PC-3 (cell line): ENCODE measurements at regions of chr11 and their contacts with region 1.

Region 1: GRCh38 chr11:102495161-102496042 is 35.1 kb downstream of the MMP7 start:
- DNase-seq: peak; percentile 95
- ATAC-seq: peak; percentile 41
- H3K4me3 ChIP-seq: no peak overlapping the region
- H3K27ac ChIP-seq: peak overlapping the region; percentile 53; the same call in 1 of the 2 replicates
- H3K4me1 ChIP-seq: peaks cover 21% of the 10 kb centered on the region
- H3K27me3 ChIP-seq: no peaks in the 10 kb centered on the region
- CTCF ChIP-seq: peak; percentile 95

Region 2: DNA sequence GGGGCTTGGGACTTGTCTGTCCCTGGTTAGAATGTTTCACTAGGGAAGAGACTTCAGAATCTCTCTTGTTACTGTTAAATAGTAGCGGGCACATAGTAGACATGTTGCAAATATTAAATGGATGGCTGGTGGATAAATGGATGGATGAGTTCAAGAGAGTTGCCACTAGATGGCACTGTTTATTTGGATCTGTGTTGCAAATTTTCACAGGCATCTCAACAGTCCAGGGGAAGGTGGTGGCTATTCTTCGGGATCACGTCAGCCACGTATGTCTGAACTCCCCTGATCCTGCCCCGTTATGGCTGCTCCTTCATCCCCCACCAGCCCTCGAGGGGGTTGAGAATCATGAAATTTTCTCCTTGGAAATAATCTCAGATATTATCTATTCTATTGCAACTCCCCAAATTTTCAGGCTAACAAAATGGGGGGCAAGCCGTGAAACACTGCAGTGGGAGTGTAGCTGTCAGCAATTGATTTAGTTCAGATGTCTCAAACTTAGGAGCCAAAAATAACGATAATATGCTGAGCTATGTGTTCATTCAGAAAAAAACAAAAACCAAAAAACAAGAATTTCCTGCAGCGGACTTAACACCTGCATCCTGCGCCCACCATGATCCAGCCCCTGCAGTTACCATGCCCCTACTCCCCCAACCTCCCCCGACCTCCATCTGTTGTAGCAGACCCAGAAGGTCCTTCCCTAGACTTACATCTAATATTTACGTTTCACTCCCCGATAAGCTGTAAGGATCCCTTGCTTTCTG is 207.3 kb before region 1 on chr11:
- CTCF ChIA-PET with region 1: no interaction called
- POLR2A ChIA-PET with region 1: no interaction called
- intact Hi-C with region 1: loop called (anchors 1 kb)
- DNase-seq: peak; percentile 96
- ATAC-seq: peak; percentile 70
- H3K4me3 ChIP-seq: peak overlapping the region; percentile 52
- H3K27ac ChIP-seq: peak overlapping the region; percentile 13
- H3K4me1 ChIP-seq: peaks cover 40% of the 10 kb centered on the region
- H3K27me3 ChIP-seq: no peaks in the 10 kb centered on the region
- CTCF ChIP-seq: peak; percentile 93

Region 3: GRCh38 chr11:102341844-102342318 is 153.5 kb before region 1 on chr11:
- CTCF ChIA-PET with region 1: no interaction called
- POLR2A ChIA-PET with region 1: no interaction called
- intact Hi-C with region 1: loop called (anchors 1 kb)
- DNase-seq: peak; percentile 93
- ATAC-seq: peak; percentile 52
- H3K4me3 ChIP-seq: no peak overlapping the region
- H3K27ac ChIP-seq: no peak overlapping the region
- H3K4me1 ChIP-seq: peaks cover 21% of the 10 kb centered on the region
- H3K27me3 ChIP-seq: no peaks in the 10 kb centered on the region
- CTCF ChIP-seq: peak; percentile 96

Region 4: DNA sequence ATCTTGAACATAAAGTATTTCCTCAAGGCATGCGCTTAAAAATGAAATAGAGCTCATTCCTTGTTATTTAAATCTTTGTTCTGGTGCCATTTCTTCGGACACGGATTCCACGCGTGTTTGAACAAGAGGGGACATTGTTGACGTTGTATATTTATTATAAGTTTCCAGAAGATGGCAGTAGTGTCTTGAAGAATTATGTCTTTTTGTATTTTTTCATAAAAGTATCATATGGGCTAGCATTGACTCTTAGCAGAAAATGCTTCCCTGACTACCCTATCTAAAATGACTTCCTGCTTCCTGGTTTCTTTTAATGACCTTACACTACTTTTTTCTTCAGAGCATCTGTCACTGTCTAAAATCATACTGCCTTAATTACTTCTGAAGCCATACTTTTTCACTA is 128.0 kb before region 1 on chr11:
- CTCF ChIA-PET with region 1: interaction called, 3 read pairs
- POLR2A ChIA-PET with region 1: no interaction called
- intact Hi-C with region 1: loop called (anchors 2 kb)
- DNase-seq: peak; percentile 59
- ATAC-seq: peak; percentile 37; the same call in 1 of the 2 replicates
- H3K4me3 ChIP-seq: no peak overlapping the region
- H3K27ac ChIP-seq: no peak overlapping the region
- H3K4me1 ChIP-seq: no peaks in the 10 kb centered on the region
- H3K27me3 ChIP-seq: no peaks in the 10 kb centered on the region
- CTCF ChIP-seq: peak; percentile 64

Region 5: DNA sequence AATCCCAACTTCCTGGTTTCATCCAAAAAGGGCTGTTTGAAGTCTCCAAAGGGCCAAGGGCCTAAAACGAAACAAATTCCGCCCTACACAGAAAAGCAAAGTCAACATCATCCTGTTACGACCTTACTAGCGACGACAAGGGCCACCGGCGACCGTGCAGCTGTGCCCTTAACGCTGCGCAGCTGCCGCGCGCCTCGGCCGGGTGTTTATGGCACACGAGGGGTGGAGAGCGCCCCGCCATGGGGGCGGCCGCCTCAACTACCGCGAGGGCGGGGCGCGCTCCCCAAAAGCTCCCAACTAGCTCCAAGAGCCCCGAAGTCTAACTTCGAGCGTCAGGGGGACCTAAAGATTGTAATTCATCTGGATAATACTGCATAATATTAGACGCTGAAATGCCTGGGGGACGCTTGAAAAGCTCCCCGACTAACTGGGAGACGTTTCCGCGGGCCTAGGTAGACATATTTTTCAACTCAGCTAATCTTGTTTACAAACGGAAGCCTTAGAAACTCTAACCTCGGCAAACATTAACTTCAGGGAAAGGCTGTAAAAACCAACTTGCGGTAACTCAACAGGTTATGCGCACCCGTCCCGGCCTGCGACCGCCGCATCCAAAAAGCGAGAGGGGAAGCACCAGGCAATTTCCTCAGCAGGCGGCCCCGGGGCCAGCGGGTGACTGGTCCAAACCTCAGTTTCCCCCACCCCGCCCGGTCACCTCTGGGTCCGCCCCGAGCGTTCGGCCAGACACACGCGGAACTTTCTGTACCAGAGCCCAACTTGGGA is 43.5 kb before region 1 on chr11:
- CTCF ChIA-PET with region 1: no interaction called
- POLR2A ChIA-PET with region 1: no interaction called
- intact Hi-C with region 1: loop called (anchors 1 kb)
- DNase-seq: peak; percentile 67
- ATAC-seq: peak; percentile 49
- H3K4me3 ChIP-seq: peak overlapping the region; percentile 81
- H3K27ac ChIP-seq: peak overlapping the region; percentile 65
- H3K4me1 ChIP-seq: peaks cover 56% of the 10 kb centered on the region
- H3K27me3 ChIP-seq: no peaks in the 10 kb centered on the region
- CTCF ChIP-seq: peak; percentile 44; the same call in 1 of the 2 replicates

Region 6: GRCh38 chr11:102599642-102600261 is 104.3 kb after region 1 on chr11:
- CTCF ChIA-PET with region 1: no interaction called
- POLR2A ChIA-PET with region 1: no interaction called
- intact Hi-C with region 1: loop called (anchors 5 kb)
- DNase-seq: peak; percentile 96
- ATAC-seq: peak; percentile 96
- H3K4me3 ChIP-seq: peak overlapping the region; percentile 41; the same call in 1 of the 2 replicates
- H3K27ac ChIP-seq: peak overlapping the region; percentile 91
- H3K4me1 ChIP-seq: peaks cover 30% of the 10 kb centered on the region
- H3K27me3 ChIP-seq: no peaks in the 10 kb centered on the region
- CTCF ChIP-seq: no peak

Region 7: GRCh38 chr11:102666331-102666957 is 171.0 kb after region 1 on chr11:
- CTCF ChIA-PET with region 1: no interaction called
- POLR2A ChIA-PET with region 1: no interaction called
- intact Hi-C with region 1: loop called (anchors 1 kb)
- DNase-seq: peak; percentile 79
- ATAC-seq: peak; percentile 67
- H3K4me3 ChIP-seq: no peak overlapping the region
- H3K27ac ChIP-seq: no peak overlapping the region
- H3K4me1 ChIP-seq: no peaks in the 10 kb centered on the region
- H3K27me3 ChIP-seq: no peaks in the 10 kb centered on the region
- CTCF ChIP-seq: peak; percentile 97